ENCODE measurements at regions of chr3 and their contacts with region 1.

Region 1: GRCh38 chr3:15500107-15500724 is 21.3 kb downstream of the COLQ start:
- DNase-seq: no peak
- H3K4me3 Mint-ChIP-seq: no peak overlapping the region
- H3K27ac Mint-ChIP-seq: peak overlapping the region; percentile 43
- H3K4me1 Mint-ChIP-seq: peaks cover 25% of the 10 kb centered on the region
- H3K27me3 Mint-ChIP-seq: no peaks in the 10 kb centered on the region

Region 2: GRCh38 chr3:15427182-15427880 is 72.9 kb before region 1 on chr3 and contains the starts of genes EAF1 and METTL6:
- intact Hi-C with region 1: loop called (anchors 5 kb)
- DNase-seq: peak; percentile 79
- H3K4me3 Mint-ChIP-seq: peak within 1 kb of the TSS; percentile 95
- H3K27ac Mint-ChIP-seq: peak within 1 kb of the TSS; percentile 89
- H3K4me1 Mint-ChIP-seq: peaks cover 41% of the 10 kb centered on the region
- H3K27me3 Mint-ChIP-seq: no peaks in the 10 kb centered on the region
- total RNA-seq, gene EAF1: 23.9 and 25.9 TPM in 2 replicates
- total RNA-seq, gene METTL6: 16.1 and 16.5 TPM in 2 replicates

Region 3: DNA sequence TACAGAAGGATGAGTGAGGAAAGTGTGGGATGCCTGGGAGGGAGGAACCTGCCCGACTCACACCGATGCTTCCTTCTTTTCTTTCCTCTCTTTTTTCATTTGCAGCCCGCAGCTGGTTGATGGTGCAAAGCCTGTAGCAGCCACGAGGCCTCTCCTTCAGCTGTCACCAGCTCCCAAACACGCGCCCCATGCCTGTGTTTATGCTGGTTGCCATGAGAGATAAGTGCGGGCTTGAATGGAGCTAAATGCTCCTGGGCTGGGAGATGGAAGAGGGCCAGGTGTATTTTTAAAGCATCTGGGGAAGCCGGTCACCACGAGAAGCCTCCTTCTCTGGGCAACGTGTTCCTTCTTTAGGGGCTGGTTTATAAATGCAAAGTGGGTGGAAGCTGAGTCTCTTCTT is 11.9 kb after region 1 on chr3:
- intact Hi-C with region 1: no loop called
- DNase-seq: no peak
- H3K4me3 Mint-ChIP-seq: no peak overlapping the region
- H3K27ac Mint-ChIP-seq: no peak overlapping the region
- H3K4me1 Mint-ChIP-seq: peaks cover 1% of the 10 kb centered on the region
- H3K27me3 Mint-ChIP-seq: peaks cover 2% of the 10 kb centered on the region

Measured in activated T-helper 2 cell treated with anti-CD3 and anti-CD28 coated beads, Interferon-gamma antibody, Interleukin-2, Interleukin-4, amounts not matched to agents 10 μg/mL and 5 μg/mL and 100 μg/mL, durations not matched to agents 14 hours and 24 hours and 36 hours (primary cell).